Ascending aorta (tissue), 2 donors: ENCODE measurements at regions of chr15 and their contacts with region 1.

Region 1: GRCh38 chr15:51829360-51830275 is at the start of gene TMOD3:
- DNase-seq: peak; percentile 69 to 94
- H3K4me3 ChIP-seq: peak within 1 kb of the TSS; percentile 89 to 97
- H3K27ac ChIP-seq: peak within 1 kb of the TSS; percentile 84 to 95
- H3K4me1 ChIP-seq: peaks cover 0 to 22% of the 10 kb centered on the region in 2 donors
- H3K27me3 ChIP-seq: no peaks in the 10 kb centered on the region
- CTCF ChIP-seq: no peak
- total RNA-seq, gene TMOD3: 28.0 TPM

Region 2: DNA sequence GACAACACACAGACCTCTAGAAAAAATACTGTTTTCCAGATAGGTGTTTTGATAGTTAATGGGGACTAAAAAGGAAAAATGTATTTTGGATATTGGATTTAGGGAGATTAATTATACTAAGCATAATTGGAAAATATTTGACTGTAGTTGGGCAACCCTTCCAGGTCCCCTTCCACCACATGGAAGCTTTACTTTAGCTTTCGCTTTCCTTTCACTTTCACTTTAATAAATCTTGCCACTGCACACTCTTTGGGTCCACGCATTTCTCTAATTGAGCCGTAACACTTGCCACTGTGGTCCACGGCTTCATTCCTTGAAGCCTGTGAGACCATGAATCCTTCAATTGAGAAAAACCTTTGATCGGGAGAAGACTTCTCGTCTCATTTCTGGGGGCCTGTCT is 472.6 kb before region 1 on chr15:
- intact Hi-C with region 1: no loop called
- DNase-seq: no peak
- H3K4me3 ChIP-seq: no peak overlapping the region
- H3K27ac ChIP-seq: no peak overlapping the region
- H3K4me1 ChIP-seq: peaks cover 0 to 7% of the 10 kb centered on the region in 2 donors
- H3K27me3 ChIP-seq: no peaks in the 10 kb centered on the region
- CTCF ChIP-seq: no peak

Region 3: DNA sequence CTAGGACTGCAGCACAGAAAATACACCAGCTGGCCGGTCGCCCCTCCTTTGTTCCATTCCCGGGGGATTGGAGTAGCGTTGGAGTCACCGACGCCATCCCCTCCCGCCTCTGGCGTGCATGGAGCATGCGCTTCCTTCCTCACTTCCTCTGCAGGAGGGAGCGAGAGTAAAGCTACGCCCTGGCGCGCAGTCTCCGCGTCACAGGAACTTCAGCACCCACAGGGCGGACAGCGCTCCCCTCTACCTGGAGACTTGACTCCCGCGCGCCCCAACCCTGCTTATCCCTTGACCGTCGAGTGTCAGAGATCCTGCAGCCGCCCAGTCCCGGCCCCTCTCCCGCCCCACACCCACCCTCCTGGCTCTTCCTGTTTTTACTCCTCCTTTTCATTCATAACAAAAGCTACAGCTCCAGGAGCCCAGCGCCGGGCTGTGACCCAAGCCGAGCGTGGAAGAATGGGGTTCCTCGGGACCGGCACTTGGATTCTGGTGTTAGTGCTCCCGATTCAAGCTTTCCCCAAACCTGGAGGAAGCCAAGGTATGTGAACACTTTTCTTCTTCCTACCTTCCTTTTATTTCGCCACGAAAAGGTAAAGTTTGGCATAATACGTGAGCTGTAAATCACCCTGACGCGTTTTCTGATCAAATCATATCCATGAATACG is 148.2 kb before region 1 on chr15 and contains the start of gene SCG3:
- intact Hi-C with region 1: no loop called
- DNase-seq: peak; percentile 9 to 68
- H3K4me3 ChIP-seq: no peak within 1 kb of the TSS
- H3K27ac ChIP-seq: no peak within 1 kb of the TSS
- H3K4me1 ChIP-seq: no peaks in the 10 kb centered on the region
- H3K27me3 ChIP-seq: no peaks in the 10 kb centered on the region
- CTCF ChIP-seq: no peak
- total RNA-seq, gene SCG3: not detected

Region 4: DNA sequence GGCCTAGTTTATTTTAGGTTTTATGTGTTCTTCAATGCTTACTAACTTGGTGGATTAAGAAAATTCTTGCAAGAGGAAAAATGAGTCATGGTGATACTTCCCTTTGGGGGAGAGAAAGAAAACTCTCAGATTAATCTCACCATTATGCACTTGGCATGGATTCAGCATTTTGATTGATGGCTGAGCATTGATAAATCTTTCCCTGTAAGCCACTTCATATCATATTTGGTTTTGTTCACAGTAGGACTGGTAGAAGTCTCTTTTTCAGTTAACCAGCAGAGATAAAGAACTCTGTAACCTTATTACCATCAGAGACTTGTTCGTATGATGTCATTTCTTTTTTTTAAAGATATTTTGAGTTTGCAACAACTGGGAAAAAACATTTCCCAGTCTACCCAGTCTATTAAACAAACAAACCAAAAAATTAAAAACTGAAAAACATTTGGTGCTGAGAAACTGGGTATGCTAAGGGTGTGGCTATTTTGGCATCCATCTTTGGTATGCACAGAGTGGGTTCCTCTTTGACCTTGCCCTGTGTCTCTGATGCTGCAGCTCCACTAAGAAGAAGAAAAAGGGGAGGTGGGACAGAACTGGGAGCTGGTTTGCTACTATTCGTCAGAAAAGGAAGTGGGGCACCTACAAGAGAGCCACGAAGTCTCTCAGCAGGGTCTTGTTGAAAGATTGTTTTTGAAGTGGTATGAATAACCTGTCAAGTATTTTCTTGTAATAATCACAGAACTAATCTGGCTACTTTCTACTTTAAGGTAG is 17.0 kb after region 1 on chr15:
- intact Hi-C with region 1: loop called (anchors 2 kb)
- DNase-seq: no peak
- H3K4me3 ChIP-seq: no peak overlapping the region
- H3K27ac ChIP-seq: peak overlapping the region; percentile 54 to 55
- H3K4me1 ChIP-seq: peaks cover 6 to 51% of the 10 kb centered on the region in 2 donors
- H3K27me3 ChIP-seq: no peaks in the 10 kb centered on the region
- CTCF ChIP-seq: no peak

Region 5: DNA sequence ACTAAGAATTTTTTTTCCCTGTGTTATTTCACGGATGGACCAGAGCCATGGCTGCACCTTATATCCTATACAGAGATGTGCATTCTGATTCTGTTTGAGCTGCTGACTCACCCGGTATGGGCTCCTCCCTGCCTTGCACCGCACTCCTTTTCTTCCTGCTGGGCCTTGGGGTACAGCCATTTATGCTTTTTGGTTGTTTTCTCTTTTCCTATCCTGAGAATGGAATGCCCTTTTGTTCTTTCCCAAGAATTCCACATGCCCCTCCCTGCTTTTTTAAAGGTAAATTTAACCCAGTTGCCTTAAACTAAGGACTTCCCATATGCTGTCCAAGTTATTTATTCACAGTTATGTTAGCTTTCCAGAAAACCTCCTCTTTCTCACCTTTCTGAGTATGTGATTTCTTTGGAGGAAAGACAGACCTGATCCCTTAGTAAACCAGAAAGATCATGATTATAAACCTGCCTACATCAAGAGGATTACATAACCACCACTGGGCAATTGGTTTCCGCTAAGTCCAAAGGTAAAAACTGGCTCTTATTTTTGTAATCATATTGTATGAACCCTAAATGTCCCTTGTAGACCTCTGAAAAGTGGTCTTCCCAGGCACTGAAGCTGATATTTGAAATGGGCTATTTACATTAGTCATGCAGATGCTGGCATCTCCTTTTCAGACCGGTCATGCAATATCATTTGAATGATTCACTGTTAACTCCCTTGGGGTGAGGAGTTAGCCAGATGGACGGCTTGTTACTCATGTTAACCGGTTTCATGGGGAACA is 45.3 kb after region 1 on chr15:
- intact Hi-C with region 1: loop called (anchors 2 kb)
- DNase-seq: peak in 1 of 2 donors; percentile 81
- H3K4me3 ChIP-seq: no peak overlapping the region
- H3K27ac ChIP-seq: peak overlapping the region; percentile 63 to 74
- H3K4me1 ChIP-seq: peaks cover 0 to 22% of the 10 kb centered on the region in 2 donors
- H3K27me3 ChIP-seq: no peaks in the 10 kb centered on the region
- CTCF ChIP-seq: no peak